Adrenal gland (tissue), 19 donors: ENCODE measurements at regions of chr19 and their contacts with region 1.

Region 1: GRCh38 chr19:42132851-42133528 is 744 bp upstream of the POU2F2 start:
- DNase-seq: peak in 6 of 7 donors; percentile 26 to 74 (median 53)
- H3K4me3 ChIP-seq: peak overlapping the region in 1 of 4 donors; percentile 39
- H3K27ac ChIP-seq: no peak overlapping the region
- H3K4me1 ChIP-seq: peaks cover 0 to 4% of the 10 kb centered on the region in 2 donors
- H3K27me3 ChIP-seq: peaks cover 13% of the 10 kb centered on the region
- CTCF ChIP-seq: peak; percentile 73 to 97 (median 86)
- POLR2A ChIP-seq: no peak

Region 2: GRCh38 chr19:42010245-42011126 is 122.5 kb before region 1 on chr19:
- intact Hi-C with region 1: no loop called
- DNase-seq: no peak
- H3K4me3 ChIP-seq: no peak overlapping the region
- H3K27ac ChIP-seq: no peak overlapping the region
- H3K4me1 ChIP-seq: no peaks in the 10 kb centered on the region
- H3K27me3 ChIP-seq: no peaks in the 10 kb centered on the region
- CTCF ChIP-seq: no peak
- POLR2A ChIP-seq: no peak

Region 3: DNA sequence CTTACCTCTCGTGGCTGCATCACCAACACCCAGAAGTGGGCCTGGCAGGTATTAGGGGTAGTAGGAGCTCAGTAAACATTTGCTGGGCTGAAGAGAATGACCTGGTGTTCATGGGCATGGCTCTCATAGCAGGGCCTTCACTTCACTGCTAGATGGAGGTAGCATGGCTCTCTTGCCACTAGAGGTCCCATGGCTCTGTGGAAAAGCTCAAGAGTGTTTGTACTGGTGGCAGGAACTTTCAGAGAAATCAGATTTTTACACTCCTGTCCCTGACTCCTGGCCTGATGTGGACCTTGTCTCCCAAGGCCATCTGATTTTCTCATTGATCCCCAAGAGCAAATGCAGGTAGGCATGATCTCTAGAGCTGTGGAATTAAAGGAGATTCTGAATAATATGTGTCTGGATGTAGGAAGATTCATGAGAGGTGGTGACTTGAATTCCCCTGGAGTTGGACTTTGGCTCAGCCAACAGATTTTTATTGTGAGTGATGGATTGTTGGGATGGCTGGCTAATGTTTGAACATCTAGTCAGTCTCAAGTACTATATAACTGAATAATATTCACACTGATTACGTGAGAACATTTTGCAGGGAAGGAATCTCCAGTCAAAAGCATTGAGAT is 51.3 kb before region 1 on chr19:
- intact Hi-C with region 1: no loop called
- DNase-seq: no peak
- H3K4me3 ChIP-seq: no peak overlapping the region
- H3K27ac ChIP-seq: peak overlapping the region in 2 of 5 donors; percentile 2 to 22
- H3K4me1 ChIP-seq: peaks cover 10 to 18% of the 10 kb centered on the region in 2 donors
- H3K27me3 ChIP-seq: no peaks in the 10 kb centered on the region
- CTCF ChIP-seq: peak in 5 of 6 experiments; percentile 13 to 43 (median 35)
- POLR2A ChIP-seq: no peak

Region 4: DNA sequence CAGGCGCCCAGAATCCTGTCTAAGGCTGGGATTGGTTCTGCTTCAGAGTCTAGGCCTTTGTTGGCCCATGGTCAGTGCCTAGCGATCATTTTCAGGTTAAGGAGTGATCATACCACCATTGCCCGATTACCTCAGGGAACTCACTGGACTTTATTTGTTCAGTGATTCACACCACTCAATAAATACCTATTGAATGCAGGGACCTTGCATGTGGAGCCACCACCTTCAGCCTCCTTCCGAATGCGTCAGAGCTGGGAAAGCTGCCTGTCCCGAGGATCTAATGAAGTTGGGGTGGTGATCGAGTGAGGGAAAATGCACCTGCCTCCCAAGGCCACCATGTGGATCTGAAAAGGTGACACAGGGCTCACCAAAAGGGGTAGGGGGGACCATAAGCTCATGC is 39.3 kb after region 1 on chr19:
- intact Hi-C with region 1: no loop called
- DNase-seq: no peak
- H3K4me3 ChIP-seq: no peak overlapping the region
- H3K27ac ChIP-seq: no peak overlapping the region
- H3K4me1 ChIP-seq: peaks cover 6 to 8% of the 10 kb centered on the region in 2 donors
- H3K27me3 ChIP-seq: peaks cover 8% of the 10 kb centered on the region
- CTCF ChIP-seq: no peak
- POLR2A ChIP-seq: no peak

Region 5: DNA sequence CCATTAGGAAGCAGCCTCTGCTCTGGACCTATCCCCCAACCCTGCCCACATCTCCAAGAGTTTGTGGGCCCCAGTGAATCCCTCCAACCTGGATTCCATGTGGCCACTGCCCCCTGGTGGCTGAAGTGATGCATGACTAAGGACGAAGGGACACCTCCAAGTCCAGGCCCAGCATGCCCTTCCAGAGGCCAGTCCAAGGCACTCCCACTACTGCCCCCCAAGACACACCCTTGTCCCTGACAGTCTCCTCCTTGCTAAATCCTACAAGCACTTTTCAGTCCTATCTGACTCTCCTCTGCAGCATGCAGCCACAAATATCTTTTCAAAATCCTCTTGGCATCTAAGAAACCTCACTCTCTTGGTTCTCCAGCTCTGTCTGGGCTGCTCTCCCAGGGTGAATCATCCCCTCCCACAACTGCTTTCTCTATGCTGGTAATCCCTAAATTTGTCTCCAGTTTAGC is 51.4 kb after region 1 on chr19:
- intact Hi-C with region 1: loop called (anchors 2 to 5 kb)
- DNase-seq: peak; percentile 72 to 92 (median 77)
- H3K4me3 ChIP-seq: no peak overlapping the region
- H3K27ac ChIP-seq: no peak overlapping the region
- H3K4me1 ChIP-seq: peaks cover 0 to 8% of the 10 kb centered on the region in 2 donors
- H3K27me3 ChIP-seq: peaks cover 23% of the 10 kb centered on the region
- CTCF ChIP-seq: peak; percentile 81 to 90 (median 86)
- POLR2A ChIP-seq: no peak

Region 6: DNA sequence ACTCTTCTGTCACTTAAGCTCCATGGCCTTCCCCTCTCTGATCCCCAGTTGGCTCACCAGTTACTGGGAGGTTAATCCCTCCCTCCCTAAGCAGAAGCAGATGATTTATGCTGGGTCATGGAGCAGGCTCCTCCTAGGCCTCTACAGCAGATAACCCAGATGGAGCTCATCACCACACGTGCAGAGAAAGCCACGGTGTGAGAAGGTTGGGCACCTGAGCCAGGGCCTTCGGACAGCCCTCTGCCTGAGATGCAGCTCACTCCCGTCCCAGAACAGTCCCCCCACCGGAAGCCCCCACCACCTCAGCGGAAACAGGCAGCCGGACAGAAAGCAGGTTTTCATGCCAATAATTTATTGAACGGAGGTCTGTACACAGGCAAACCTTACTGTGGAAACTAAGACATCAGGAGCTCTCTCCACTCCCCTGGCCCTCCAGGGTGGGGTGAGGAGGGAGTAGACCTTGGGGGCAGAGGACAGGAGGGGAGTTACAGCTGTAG is 96.9 kb after region 1 on chr19:
- intact Hi-C with region 1: loop called in 1 of 2 experiments (anchors 10 kb)
- DNase-seq: no peak
- H3K4me3 ChIP-seq: no peak overlapping the region
- H3K27ac ChIP-seq: peak overlapping the region in 2 of 5 donors; percentile 15 to 48
- H3K4me1 ChIP-seq: peaks cover 6 to 11% of the 10 kb centered on the region in 2 donors
- H3K27me3 ChIP-seq: no peaks in the 10 kb centered on the region
- CTCF ChIP-seq: no peak
- POLR2A ChIP-seq: no peak

Region 7: DNA sequence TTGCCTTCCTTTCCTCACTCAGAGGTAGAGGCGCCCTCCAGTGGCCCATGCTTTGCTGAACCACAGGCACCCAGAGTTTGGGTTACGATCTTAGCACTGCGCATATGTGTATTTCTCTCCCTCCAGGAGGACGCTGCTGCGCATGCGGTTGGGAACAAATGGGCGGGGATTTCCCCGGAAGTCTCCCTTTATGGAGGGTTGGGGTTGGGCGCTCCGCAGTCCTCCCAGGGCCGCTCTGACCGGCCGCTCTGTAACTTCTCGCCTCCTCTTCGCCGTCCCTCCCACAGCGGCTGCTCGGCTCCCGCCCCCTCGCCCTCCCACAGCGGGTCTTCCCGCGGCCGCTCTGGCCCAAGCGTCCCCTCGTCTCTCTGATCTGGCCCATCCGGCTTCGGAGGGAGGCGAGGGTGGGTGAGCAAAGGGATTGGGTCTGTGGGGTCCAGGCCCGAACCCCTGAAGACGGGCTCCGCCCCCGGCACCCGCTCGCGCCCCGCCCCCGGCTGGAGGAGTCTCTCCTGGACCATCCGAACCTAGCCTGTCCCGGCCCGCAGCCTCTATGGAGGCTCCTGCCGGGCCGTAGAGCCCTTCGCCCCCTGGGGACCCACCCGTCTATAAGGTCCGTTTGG is 192.4 kb after region 1 on chr19 and contains the start of gene MEGF8:
- intact Hi-C with region 1: loop called in 1 of 2 experiments (anchors 10 kb)
- DNase-seq: peak; percentile 97 to 99 (median 98)
- H3K4me3 ChIP-seq: peak within 1 kb of the TSS; percentile 52 to 91 (median 76)
- H3K27ac ChIP-seq: peak within 1 kb of the TSS in 3 of 5 donors; percentile 64 to 78 (median 65)
- H3K4me1 ChIP-seq: peaks cover 14 to 22% of the 10 kb centered on the region in 2 donors
- H3K27me3 ChIP-seq: peaks cover 16% of the 10 kb centered on the region
- CTCF ChIP-seq: peak; percentile 74 to 94 (median 87)
- POLR2A ChIP-seq: peak; percentile 63 to 95
- total RNA-seq, gene MEGF8: 9.0 to 51.9 (median 31.3) TPM